CD14-positive monocyte (primary cell): ENCODE measurements at regions of chr20 and their contacts with region 1.

Region 1: GRCh38 chr20:44609511-44610312 is 27.3 kb downstream of the PKIG start:
- DNase-seq: peak; percentile 70 to 88 (median 88)
- H3K4me3 ChIP-seq: peak overlapping the region in 1 of 3 experiments; percentile 58
- H3K4me3 Mint-ChIP-seq: peak overlapping the region; percentile 70 to 86
- H3K27ac ChIP-seq: peak overlapping the region in 1 of 2 donors; percentile 41
- H3K27ac Mint-ChIP-seq: peak overlapping the region in 5 of 7 donors; percentile 63 to 88 (median 88)
- H3K4me1 ChIP-seq: peaks cover 24 to 27% of the 10 kb centered on the region in 2 donors
- H3K4me1 Mint-ChIP-seq: peaks cover 16% of the 10 kb centered on the region
- H3K27me3 ChIP-seq: no peaks in the 10 kb centered on the region
- H3K27me3 Mint-ChIP-seq: peaks cover 0 to 3% (median 2%) of the 10 kb centered on the region in 3 donors
- CTCF ChIP-seq: peak; percentile 98

Region 2: GRCh38 chr20:44388466-44389023 is 221.2 kb before region 1 on chr20:
- intact Hi-C with region 1: loop called (anchors 5 kb)
- DNase-seq: peak; percentile 32 to 61 (median 45)
- H3K4me3 ChIP-seq: no peak overlapping the region
- H3K4me3 Mint-ChIP-seq: peak overlapping the region in 1 of 2 donors; percentile 70
- H3K27ac ChIP-seq: no peak overlapping the region
- H3K27ac Mint-ChIP-seq: no peak overlapping the region
- H3K4me1 ChIP-seq: peaks cover 0 to 6% of the 10 kb centered on the region in 2 donors
- H3K4me1 Mint-ChIP-seq: peaks cover 6% of the 10 kb centered on the region
- H3K27me3 ChIP-seq: peaks cover 0 to 7% of the 10 kb centered on the region in 2 donors
- H3K27me3 Mint-ChIP-seq: peaks cover 12 to 17% (median 17%) of the 10 kb centered on the region in 3 donors
- CTCF ChIP-seq: peak; percentile 86

Region 3: GRCh38 chr20:44475694-44476560 is 133.8 kb before region 1 on chr20 and contains the start of gene TTPAL:
- intact Hi-C with region 1: loop called in 1 of 2 experiments (anchors 5 kb)
- DNase-seq: peak; percentile 82 to 87 (median 85)
- H3K4me3 ChIP-seq: peak within 1 kb of the TSS; percentile 59 to 75 (median 74)
- H3K4me3 Mint-ChIP-seq: peak within 1 kb of the TSS; percentile 89 to 94
- H3K27ac ChIP-seq: peak within 1 kb of the TSS; percentile 46 to 88
- H3K27ac Mint-ChIP-seq: peak within 1 kb of the TSS; percentile 91 to 96 (median 94)
- H3K4me1 ChIP-seq: peaks cover 14 to 17% of the 10 kb centered on the region in 2 donors
- H3K4me1 Mint-ChIP-seq: peaks cover 19% of the 10 kb centered on the region
- H3K27me3 ChIP-seq: no peaks in the 10 kb centered on the region
- H3K27me3 Mint-ChIP-seq: peaks cover 0 to 6% (median 4%) of the 10 kb centered on the region in 3 donors
- CTCF ChIP-seq: no peak
- polyA plus RNA-seq, gene TTPAL: 1.5 to 4.9 (median 3.0) TPM

Region 4: GRCh38 chr20:44521484-44522481 is 87.9 kb before region 1 on chr20 and contains the start of gene SERINC3:
- intact Hi-C with region 1: loop called in 1 of 2 experiments (anchors 5 kb)
- DNase-seq: peak; percentile 96 to 98 (median 98)
- H3K4me3 ChIP-seq: peak within 1 kb of the TSS; percentile 88 to 97 (median 95)
- H3K4me3 Mint-ChIP-seq: peak within 1 kb of the TSS; percentile 87 to 88
- H3K27ac ChIP-seq: peak within 1 kb of the TSS; percentile 92 to 97
- H3K27ac Mint-ChIP-seq: peak within 1 kb of the TSS; percentile 95 to 98 (median 96)
- H3K4me1 ChIP-seq: peaks cover 25 to 39% of the 10 kb centered on the region in 2 donors
- H3K4me1 Mint-ChIP-seq: peaks cover 40% of the 10 kb centered on the region
- H3K27me3 ChIP-seq: no peaks in the 10 kb centered on the region
- H3K27me3 Mint-ChIP-seq: no peaks in the 10 kb centered on the region
- CTCF ChIP-seq: no peak
- polyA plus RNA-seq, gene SERINC3: 49.8 to 194 (median 157) TPM

Region 5: DNA sequence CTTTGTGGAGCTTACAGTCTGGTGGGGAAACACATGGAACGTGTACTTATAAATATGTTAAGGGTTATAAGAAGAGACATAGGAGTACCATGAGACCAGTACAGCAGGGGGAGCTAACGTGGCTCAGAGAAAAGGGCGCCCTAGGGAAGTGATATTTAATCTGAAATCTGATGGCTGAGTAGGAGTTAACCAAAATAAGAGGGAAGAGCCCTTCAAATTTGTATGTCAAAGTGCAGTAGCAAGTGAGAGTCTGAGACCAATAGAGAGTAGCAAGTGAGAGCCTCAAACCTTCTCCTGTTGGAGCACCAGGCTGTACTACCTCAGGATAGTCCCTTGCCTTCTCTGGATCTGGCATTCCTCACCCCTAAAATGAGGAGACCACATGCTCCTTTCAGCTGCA is 33.4 kb before region 1 on chr20:
- intact Hi-C with region 1: loop called in 1 of 2 experiments (anchors 2 kb)
- DNase-seq: peak; percentile 48 to 65 (median 51)
- H3K4me3 ChIP-seq: peak overlapping the region in 1 of 3 experiments; percentile 5
- H3K4me3 Mint-ChIP-seq: peak overlapping the region in 1 of 2 donors; percentile 77
- H3K27ac ChIP-seq: peak overlapping the region in 1 of 2 donors; percentile 70
- H3K27ac Mint-ChIP-seq: peak overlapping the region; percentile 82 to 92 (median 89)
- H3K4me1 ChIP-seq: peaks cover 21 to 22% of the 10 kb centered on the region in 2 donors
- H3K4me1 Mint-ChIP-seq: peaks cover 39% of the 10 kb centered on the region
- H3K27me3 ChIP-seq: no peaks in the 10 kb centered on the region
- H3K27me3 Mint-ChIP-seq: peaks cover 0 to 3% (median 0%) of the 10 kb centered on the region in 3 donors
- CTCF ChIP-seq: peak; percentile 41

Region 6: GRCh38 chr20:44651684-44652423 is 42.1 kb after region 1 on chr20 and contains the start of gene ADA:
- intact Hi-C with region 1: loop called in 1 of 2 experiments (anchors 5 kb)
- DNase-seq: peak in 2 of 3 donors; percentile 34 to 64
- H3K4me3 ChIP-seq: peak within 1 kb of the TSS; percentile 71 to 91 (median 81)
- H3K4me3 Mint-ChIP-seq: peak within 1 kb of the TSS; percentile 80 to 98
- H3K27ac ChIP-seq: peak within 1 kb of the TSS; percentile 47 to 84
- H3K27ac Mint-ChIP-seq: peak within 1 kb of the TSS; percentile 8 to 87 (median 57)
- H3K4me1 ChIP-seq: peaks cover 39 to 45% of the 10 kb centered on the region in 2 donors
- H3K4me1 Mint-ChIP-seq: peaks cover 51% of the 10 kb centered on the region
- H3K27me3 ChIP-seq: no peaks in the 10 kb centered on the region
- H3K27me3 Mint-ChIP-seq: peaks cover 0 to 9% (median 7%) of the 10 kb centered on the region in 3 donors
- CTCF ChIP-seq: no peak
- polyA plus RNA-seq, gene ADA: 11.1 to 17.2 (median 15.6) TPM

Region 7: GRCh38 chr20:44837946-44838345 is 228.2 kb after region 1 on chr20:
- intact Hi-C with region 1: no loop called
- DNase-seq: no peak
- H3K4me3 ChIP-seq: no peak overlapping the region
- H3K4me3 Mint-ChIP-seq: no peak overlapping the region
- H3K27ac ChIP-seq: no peak overlapping the region
- H3K27ac Mint-ChIP-seq: no peak overlapping the region
- H3K4me1 ChIP-seq: no peaks in the 10 kb centered on the region
- H3K4me1 Mint-ChIP-seq: no peaks in the 10 kb centered on the region
- H3K27me3 ChIP-seq: peaks cover 2 to 8% of the 10 kb centered on the region in 2 donors
- H3K27me3 Mint-ChIP-seq: peaks cover 5 to 19% (median 10%) of the 10 kb centered on the region in 3 donors
- CTCF ChIP-seq: no peak

Region 8: DNA sequence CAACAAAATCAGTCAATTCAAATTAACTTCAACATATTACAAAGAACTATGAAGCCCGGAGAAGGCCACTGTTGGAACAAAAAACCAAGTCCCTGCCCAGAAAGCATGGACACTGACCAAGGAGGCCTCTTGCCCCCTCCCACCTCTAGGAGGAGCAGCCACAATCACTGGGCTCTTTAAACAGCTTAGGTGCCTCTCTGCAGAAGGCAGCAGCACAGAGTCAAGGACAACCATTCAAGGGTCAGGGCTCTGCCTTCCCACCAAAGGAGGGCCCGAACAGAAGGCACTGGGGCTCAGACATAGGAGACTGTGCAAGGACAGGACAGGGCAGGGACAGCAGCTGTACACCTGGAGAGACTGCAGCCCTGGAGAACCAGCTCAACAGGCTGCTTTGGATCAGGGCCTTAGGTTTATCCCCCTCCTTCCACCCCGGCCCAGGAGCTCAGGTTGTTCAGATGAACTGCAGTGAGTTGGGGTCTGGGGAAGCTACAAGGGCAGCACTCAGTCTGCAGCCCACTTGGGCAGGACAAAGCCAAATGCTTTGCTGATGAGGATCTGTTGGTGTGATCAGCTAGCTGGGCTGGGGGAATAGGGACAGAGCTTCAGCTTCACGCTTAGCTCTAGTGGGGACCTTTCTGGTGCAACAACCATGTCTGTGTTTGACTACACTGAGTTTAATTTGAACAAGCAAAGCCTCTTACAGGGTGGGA is 332.7 kb after region 1 on chr20:
- intact Hi-C with region 1: no loop called
- DNase-seq: no peak
- H3K4me3 ChIP-seq: no peak overlapping the region
- H3K4me3 Mint-ChIP-seq: no peak overlapping the region
- H3K27ac ChIP-seq: no peak overlapping the region
- H3K27ac Mint-ChIP-seq: peak overlapping the region in 2 of 7 donors; percentile 46 to 47
- H3K4me1 ChIP-seq: peaks cover 6 to 7% of the 10 kb centered on the region in 2 donors
- H3K4me1 Mint-ChIP-seq: peaks cover 11% of the 10 kb centered on the region
- H3K27me3 ChIP-seq: no peaks in the 10 kb centered on the region
- H3K27me3 Mint-ChIP-seq: peaks cover 0 to 3% (median 0%) of the 10 kb centered on the region in 3 donors
- CTCF ChIP-seq: no peak